Uterus (tissue), 4 donors: ENCODE measurements at regions of chr15 and their contacts with region 1.

Region 1: GRCh38 chr15:64731012-64731806 is 44.2 kb downstream of the RBPMS2 start:
- DNase-seq: peak; percentile 87 to 90
- H3K4me3 ChIP-seq: no peak overlapping the region
- H3K27ac ChIP-seq: no peak overlapping the region
- H3K4me1 ChIP-seq: no peaks in the 10 kb centered on the region
- H3K27me3 ChIP-seq: no peaks in the 10 kb centered on the region
- CTCF ChIP-seq: peak; percentile 87 to 93 (median 90)
- POLR2A ChIP-seq: peak in 1 of 2 donors; percentile 12

Region 2: GRCh38 chr15:64681424-64682024 is 49.7 kb before region 1 on chr15:
- intact Hi-C with region 1: loop called (anchors 2 kb)
- DNase-seq: peak in 1 of 2 donors; percentile 46
- H3K4me3 ChIP-seq: no peak overlapping the region
- H3K27ac ChIP-seq: peak overlapping the region in 1 of 2 donors; percentile 39
- H3K4me1 ChIP-seq: peaks cover 0 to 7% of the 10 kb centered on the region in 2 donors
- H3K27me3 ChIP-seq: no peaks in the 10 kb centered on the region
- CTCF ChIP-seq: peak; percentile 41 to 71 (median 68)
- POLR2A ChIP-seq: no peak

Region 3: DNA sequence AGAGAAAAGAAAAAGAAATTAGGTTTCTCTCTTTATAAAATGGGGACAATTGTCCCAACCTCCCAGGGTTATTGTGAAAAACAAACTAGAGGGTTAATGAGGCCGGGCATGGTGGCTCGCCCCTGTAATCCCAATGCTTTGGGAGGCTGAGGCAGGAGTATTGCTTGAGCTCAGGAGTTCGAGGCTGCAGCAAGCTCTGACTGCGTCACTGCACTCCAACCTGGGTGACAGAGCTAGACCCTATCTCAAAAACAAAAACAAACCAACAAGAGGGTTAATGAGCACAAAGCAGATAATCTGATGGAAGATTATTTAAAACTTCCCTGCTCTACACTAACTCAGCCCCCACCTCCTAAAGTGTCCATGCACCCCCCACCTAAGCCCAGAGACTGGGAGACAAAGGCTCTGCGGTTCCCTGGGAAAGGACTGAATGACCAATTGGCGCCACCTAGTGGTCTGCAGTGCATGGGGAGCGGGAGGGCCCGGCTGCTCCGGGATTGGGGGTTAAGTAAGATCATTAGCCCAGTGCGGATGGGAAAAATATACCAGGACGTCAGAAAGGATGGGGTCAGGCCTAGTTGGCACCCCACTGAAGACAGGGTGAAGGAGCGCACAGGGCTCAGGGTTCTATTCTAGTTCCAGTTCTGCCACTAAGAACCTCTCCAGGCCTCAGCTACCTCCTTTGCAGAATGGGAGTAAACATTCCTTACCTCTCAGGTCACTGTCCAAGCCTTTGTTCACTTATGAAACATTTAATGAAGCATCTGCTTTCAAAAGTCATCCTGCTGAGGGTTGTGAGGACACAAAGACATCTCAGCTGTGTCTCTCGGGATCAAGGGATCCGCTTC is 78.7 kb after region 1 on chr15:
- intact Hi-C with region 1: loop called (anchors 5 kb)
- DNase-seq: peak; percentile 85 to 89
- H3K4me3 ChIP-seq: no peak overlapping the region
- H3K27ac ChIP-seq: peak overlapping the region; percentile 82 to 90
- H3K4me1 ChIP-seq: peaks cover 0 to 10% of the 10 kb centered on the region in 2 donors
- H3K27me3 ChIP-seq: no peaks in the 10 kb centered on the region
- CTCF ChIP-seq: peak; percentile 95 to 97 (median 96)
- POLR2A ChIP-seq: no peak

Region 4: DNA sequence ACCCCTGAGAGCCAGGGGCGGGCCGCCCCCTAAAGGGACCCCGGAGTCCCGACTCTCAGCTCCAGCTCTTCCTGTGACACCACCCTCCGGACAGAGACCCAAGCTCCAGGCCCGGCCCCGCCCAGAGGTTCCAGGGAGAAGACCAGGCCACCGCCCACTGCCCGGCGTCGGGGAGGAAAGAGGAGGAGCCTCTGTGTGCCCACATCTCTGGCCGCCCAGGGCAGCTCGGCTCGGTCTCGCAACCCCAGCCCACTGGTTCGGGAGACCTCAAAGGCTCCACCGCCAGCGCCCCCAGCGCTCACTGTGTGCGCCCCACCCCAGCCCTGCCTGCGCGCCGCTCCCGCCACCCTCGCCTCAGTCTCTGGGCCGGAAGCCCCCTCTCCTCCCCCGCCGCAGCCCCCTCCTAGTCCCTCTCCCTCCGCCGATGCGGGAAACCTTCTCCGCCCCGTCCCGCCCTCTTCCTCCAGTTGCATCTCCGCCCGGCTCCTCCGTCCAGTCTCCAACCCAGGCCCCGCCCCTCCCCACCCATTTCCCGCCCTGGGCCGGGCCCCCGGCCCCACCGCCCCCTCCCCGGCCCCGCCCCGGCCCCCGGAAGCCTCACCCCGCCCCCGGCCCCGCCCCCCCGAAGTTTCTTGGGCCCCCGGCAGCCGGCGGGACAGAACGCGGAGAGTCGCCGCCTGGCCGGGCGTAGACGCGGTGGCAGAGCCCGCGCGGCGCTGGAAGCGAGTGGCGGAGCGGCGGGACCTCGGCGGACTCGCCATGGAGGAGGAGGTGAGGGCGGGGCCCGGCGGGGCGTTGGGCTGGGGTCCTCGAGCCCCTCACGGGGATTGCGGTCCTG is 110.3 kb after region 1 on chr15 and contains the start of gene PLEKHO2:
- intact Hi-C with region 1: no loop called
- DNase-seq: peak; percentile 96 to 98
- H3K4me3 ChIP-seq: peak within 1 kb of the TSS; percentile 63 to 87
- H3K27ac ChIP-seq: peak within 1 kb of the TSS; percentile 92 to 94
- H3K4me1 ChIP-seq: peaks cover 6 to 13% of the 10 kb centered on the region in 2 donors
- H3K27me3 ChIP-seq: no peaks in the 10 kb centered on the region
- CTCF ChIP-seq: peak in 3 of 4 experiments; percentile 14 to 37 (median 19)
- POLR2A ChIP-seq: peak; percentile 76 to 77
- total RNA-seq, gene PLEKHO2: 10.3 to 46.2 (median 23.0) TPM

Region 5: DNA sequence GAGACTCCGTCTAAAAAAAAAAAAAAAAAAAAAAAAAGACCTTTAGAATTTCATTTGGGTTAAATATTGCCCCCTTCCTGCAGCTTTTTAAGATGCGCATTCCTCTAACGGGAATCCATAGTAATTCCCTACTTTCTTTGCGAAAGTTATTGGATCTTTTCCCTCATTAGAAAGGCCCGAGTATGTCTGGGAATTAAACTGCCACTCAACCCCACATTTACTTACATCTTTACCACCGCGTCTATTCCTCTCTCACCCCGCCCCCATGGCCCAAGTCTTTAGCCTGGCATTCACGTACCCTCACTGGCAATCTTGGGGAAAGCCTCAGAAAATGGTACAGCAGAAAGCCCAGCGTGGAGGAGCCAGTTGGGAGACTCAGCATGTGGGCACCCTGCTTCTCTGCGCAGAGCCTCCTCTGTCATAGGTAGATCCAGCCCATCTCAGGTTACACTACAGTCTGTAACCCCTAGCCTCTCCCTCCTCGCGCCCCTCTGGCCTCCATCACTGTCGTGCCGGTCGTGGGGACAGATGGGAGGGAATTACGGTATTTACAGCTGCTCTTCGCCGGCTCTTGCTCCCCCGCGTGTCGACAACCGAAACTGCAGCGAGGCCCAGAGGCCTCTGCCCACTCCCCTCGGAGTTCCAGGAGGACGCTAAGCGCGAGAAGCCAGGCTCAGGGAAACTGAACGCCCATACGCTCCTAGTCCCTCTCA is 174.1 kb after region 1 on chr15:
- intact Hi-C with region 1: loop called (anchors 10 kb)
- DNase-seq: peak; percentile 76 to 80
- H3K4me3 ChIP-seq: peak overlapping the region; percentile 23 to 34
- H3K27ac ChIP-seq: peak overlapping the region; percentile 33 to 37
- H3K4me1 ChIP-seq: no peaks in the 10 kb centered on the region
- H3K27me3 ChIP-seq: no peaks in the 10 kb centered on the region
- CTCF ChIP-seq: peak; percentile 81 to 93 (median 90)
- POLR2A ChIP-seq: peak in 1 of 2 donors; percentile 19